Dendritic cell treated with granulocyte-macrophage colony-stimulating factor and Interleukin-4, amounts not matched to agents 40 ng/mL and 50 ng/mL, for 4 days (primary cell): ENCODE measurements at regions of chr10 and their contacts with region 1.

Region 1: GRCh38 chr10:80924063-80924952 is 386.6 kb downstream of the SH2D4B start:
- H3K4me3 Mint-ChIP-seq: no peak overlapping the region
- H3K27ac Mint-ChIP-seq: no peak overlapping the region
- H3K4me1 Mint-ChIP-seq: no peaks in the 10 kb centered on the region
- H3K27me3 Mint-ChIP-seq: peaks cover 6% of the 10 kb centered on the region

Region 2: GRCh38 chr10:80444646-80445319 is 479.5 kb before region 1 on chr10:
- intact Hi-C with region 1: loop called (anchors 5 kb)
- H3K4me3 Mint-ChIP-seq: no peak overlapping the region
- H3K27ac Mint-ChIP-seq: peak overlapping the region; percentile 34
- H3K4me1 Mint-ChIP-seq: peaks cover 50% of the 10 kb centered on the region
- H3K27me3 Mint-ChIP-seq: peaks cover 1% of the 10 kb centered on the region

Region 3: GRCh38 chr10:80599424-80599847 is 324.9 kb before region 1 on chr10:
- intact Hi-C with region 1: loop called (anchors 5 kb)
- H3K4me3 Mint-ChIP-seq: no peak overlapping the region
- H3K27ac Mint-ChIP-seq: peak overlapping the region; percentile 75
- H3K4me1 Mint-ChIP-seq: peaks cover 41% of the 10 kb centered on the region
- H3K27me3 Mint-ChIP-seq: peaks cover 2% of the 10 kb centered on the region

Region 4: GRCh38 chr10:80662577-80663261 is 261.6 kb before region 1 on chr10:
- intact Hi-C with region 1: loop called (anchors 1 kb)
- H3K4me3 Mint-ChIP-seq: peak overlapping the region; percentile 37
- H3K27ac Mint-ChIP-seq: no peak overlapping the region
- H3K4me1 Mint-ChIP-seq: peaks cover 19% of the 10 kb centered on the region
- H3K27me3 Mint-ChIP-seq: peaks cover 5% of the 10 kb centered on the region

Region 5: DNA sequence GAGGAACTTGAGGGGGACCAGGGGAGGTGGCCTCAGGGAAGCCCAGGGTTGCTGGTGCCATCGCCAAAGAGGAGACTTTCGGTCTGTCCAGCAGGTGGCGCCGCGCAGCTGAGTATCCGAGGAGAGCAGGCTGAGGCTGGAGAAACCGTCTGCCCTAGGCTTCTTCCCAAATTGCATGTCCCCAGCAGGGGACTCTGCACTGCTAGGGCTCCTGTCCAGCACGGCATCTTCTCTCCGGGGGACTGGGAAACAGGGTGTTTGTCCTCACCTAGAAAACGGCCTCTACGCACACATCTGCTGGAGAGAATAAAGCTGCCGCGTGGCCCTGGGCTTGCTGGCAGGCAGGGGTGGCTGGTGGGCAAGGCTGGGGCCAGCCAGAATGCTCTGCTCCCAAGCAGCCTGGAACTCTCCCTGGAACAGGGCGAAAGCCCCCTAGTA is 224.7 kb before region 1 on chr10:
- intact Hi-C with region 1: loop called (anchors 10 kb)
- H3K4me3 Mint-ChIP-seq: no peak overlapping the region
- H3K27ac Mint-ChIP-seq: no peak overlapping the region
- H3K4me1 Mint-ChIP-seq: no peaks in the 10 kb centered on the region
- H3K27me3 Mint-ChIP-seq: peaks cover 3% of the 10 kb centered on the region